Endothelial cell of umbilical vein (primary cell): ENCODE measurements at regions of chr10 and their contacts with region 1.

Region 1: DNA sequence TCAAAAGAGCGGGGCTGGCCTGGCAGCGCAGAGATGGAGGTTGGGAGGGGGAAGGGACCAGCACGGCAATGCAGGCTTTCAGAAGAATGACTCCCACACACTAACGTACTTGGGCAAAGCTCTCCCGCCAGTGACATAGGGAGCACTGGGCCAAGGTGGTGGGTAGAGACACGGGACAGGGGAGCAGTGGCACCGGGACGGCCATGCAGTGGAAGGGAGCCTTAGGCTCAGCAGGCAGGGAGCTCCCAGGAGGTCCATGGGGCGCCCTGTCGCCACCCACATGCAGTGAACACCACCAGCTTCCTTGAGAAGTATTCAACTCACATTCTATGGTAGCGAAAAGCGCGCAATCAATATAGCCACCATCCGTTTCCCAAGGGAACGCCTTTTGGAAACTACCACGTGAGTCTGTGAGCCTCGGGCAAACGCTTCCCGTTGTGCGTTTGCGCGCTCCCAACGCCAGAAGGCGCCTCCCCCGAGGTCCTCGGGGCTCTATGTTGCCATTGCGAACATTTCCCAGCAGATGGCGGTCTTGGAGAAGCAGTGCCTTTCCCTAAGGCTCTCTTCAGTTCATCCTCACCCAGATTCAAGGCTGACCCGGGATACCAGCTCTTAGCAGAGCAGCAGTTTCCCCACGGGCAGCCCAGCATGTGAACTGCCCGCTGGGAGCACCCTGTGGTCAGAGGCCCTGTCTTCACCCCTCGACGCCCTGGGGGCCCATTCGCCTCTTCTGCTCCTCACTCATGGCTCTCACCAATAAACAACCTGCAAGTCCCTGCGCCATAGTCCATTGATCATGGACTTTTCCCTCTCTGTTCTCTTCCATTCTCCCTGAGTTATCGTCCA is 16.4 kb upstream of the OPALIN start:
- DNase-seq: peak; percentile 90
- H3K4me3 ChIP-seq: peak overlapping the region in 2 of 3 experiments; percentile 47 to 48
- H3K27ac ChIP-seq: no peak overlapping the region
- H3K4me1 ChIP-seq: no peaks in the 10 kb centered on the region
- H3K27me3 ChIP-seq: peaks cover 0 to 2% of the 10 kb centered on the region in 2 experiments
- CTCF ChIP-seq: peak; percentile 96 to 98
- POLR2A ChIP-seq: no peak

Region 2: GRCh38 chr10:96334616-96335526 is 40.3 kb before region 1 on chr10:
- CTCF ChIA-PET with region 1: interaction called, 11 read pairs
- POLR2A ChIA-PET with region 1: no interaction called
- dilution Hi-C with region 1: no loop called
- intact Hi-C with region 1: loop called (anchors 1 kb)
- DNase-seq: peak; percentile 50
- H3K4me3 ChIP-seq: no peak overlapping the region
- H3K27ac ChIP-seq: no peak overlapping the region
- H3K4me1 ChIP-seq: no peaks in the 10 kb centered on the region
- H3K27me3 ChIP-seq: peaks cover 0 to 6% of the 10 kb centered on the region in 2 experiments
- CTCF ChIP-seq: peak; percentile 68 to 74
- POLR2A ChIP-seq: no peak

Region 3: DNA sequence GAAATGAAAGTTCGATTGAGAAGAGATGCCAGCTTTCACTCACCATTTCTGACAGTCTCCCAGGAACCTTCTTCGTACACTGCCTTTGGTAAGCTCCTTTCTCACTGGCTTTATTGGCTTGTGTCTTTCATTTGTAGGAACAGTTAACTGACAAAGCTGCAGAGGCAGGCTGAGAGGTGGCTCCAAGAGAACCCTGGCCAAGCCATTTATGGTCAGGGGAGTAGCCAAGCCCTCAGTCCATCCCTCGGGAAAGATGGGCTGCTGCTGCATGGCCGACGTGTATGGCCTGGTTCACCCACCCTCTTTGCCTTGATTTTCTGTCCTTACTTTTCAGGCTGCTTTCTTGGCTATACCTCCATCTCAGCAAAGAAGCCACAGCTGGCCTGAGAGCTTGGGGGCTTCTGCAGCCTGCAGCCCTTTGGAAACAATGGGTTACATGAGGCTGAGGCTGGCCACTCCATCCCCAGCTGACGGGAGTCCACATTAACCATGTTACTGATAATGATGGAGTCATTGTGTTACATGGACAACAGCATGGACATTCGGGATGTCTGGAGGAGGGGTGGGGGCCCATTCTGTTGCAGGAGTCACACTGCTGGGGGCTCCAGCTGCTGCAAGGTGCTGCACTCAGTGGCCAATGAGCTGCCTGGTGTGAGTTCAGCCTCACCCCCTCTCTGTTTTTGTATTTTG is 16.2 kb before region 1 on chr10 and contains the start of gene OPALIN:
- CTCF ChIA-PET with region 1: interaction called, 17 read pairs
- POLR2A ChIA-PET with region 1: no interaction called
- dilution Hi-C with region 1: no loop called
- intact Hi-C with region 1: no loop called
- DNase-seq: no peak
- H3K4me3 ChIP-seq: no peak within 1 kb of the TSS
- H3K27ac ChIP-seq: no peak within 1 kb of the TSS
- H3K4me1 ChIP-seq: no peaks in the 10 kb centered on the region
- H3K27me3 ChIP-seq: peaks cover 2% of the 10 kb centered on the region in 2 experiments
- CTCF ChIP-seq: no peak
- POLR2A ChIP-seq: no peak
- total RNA-seq, gene OPALIN: not detected in 2 replicates

Region 4: DNA sequence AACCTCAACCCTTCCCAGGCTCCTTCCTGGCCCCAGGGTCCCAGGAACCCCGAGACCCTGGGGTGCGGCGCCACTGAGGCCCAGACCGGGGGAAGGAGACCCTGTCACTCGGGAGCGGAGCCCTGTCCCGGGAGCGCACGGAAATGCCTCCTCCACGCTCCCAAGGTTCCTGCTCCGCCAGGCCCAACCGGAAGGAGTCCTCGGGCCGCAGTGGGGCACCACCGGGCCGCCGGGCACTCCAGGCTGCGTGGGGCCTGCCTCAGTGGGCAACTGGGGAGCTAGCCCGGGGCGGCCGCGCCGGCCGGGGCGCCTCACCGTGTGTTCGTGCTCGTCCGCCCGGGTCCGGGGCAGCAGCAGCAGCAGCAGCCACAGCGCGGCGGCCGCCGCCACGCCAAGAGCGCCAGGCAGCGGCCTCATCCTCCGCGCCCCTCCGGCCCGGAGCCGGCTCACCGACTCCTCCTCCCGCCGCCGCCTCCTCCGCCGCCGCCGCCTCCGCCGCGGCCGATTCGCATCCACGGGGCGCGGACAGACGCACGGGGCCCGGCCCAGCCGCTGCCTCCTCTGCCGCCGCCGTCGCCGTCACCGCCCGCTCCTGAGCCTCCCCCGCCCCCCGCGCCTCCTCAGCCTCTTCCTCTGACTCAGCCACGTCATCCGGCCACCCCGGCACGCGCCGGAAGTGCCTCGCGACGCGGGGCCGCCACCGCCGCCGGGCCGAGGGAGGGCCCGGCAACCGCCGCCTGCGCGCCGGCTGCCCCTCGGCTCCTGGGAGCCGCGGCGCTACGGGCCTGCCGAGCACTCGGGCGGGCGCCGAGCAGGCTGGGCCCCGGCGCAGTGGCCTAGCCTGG is 211.4 kb after region 1 on chr10 and contains the start of gene TM9SF3:
- CTCF ChIA-PET with region 1: no interaction called
- POLR2A ChIA-PET with region 1: no interaction called
- dilution Hi-C with region 1: no loop called
- intact Hi-C with region 1: loop called (anchors 1 kb)
- DNase-seq: peak; percentile 84
- H3K4me3 ChIP-seq: peak within 1 kb of the TSS; percentile 59 to 92 (median 61)
- H3K27ac ChIP-seq: peak within 1 kb of the TSS; percentile 98
- H3K4me1 ChIP-seq: peaks cover 53% of the 10 kb centered on the region
- H3K27me3 ChIP-seq: no peaks in the 10 kb centered on the region
- CTCF ChIP-seq: no peak
- POLR2A ChIP-seq: peak; percentile 26
- total RNA-seq, gene TM9SF3: 142 and 144 TPM in 2 replicates

Region 5: GRCh38 chr10:96656839-96657238 is 281.6 kb after region 1 on chr10:
- CTCF ChIA-PET with region 1: no interaction called
- POLR2A ChIA-PET with region 1: no interaction called
- dilution Hi-C with region 1: no loop called
- intact Hi-C with region 1: no loop called
- DNase-seq: no peak
- H3K4me3 ChIP-seq: no peak overlapping the region
- H3K27ac ChIP-seq: no peak overlapping the region
- H3K4me1 ChIP-seq: no peaks in the 10 kb centered on the region
- H3K27me3 ChIP-seq: peaks cover 0 to 3% of the 10 kb centered on the region in 2 experiments
- CTCF ChIP-seq: no peak
- POLR2A ChIP-seq: no peak

Region 6: DNA sequence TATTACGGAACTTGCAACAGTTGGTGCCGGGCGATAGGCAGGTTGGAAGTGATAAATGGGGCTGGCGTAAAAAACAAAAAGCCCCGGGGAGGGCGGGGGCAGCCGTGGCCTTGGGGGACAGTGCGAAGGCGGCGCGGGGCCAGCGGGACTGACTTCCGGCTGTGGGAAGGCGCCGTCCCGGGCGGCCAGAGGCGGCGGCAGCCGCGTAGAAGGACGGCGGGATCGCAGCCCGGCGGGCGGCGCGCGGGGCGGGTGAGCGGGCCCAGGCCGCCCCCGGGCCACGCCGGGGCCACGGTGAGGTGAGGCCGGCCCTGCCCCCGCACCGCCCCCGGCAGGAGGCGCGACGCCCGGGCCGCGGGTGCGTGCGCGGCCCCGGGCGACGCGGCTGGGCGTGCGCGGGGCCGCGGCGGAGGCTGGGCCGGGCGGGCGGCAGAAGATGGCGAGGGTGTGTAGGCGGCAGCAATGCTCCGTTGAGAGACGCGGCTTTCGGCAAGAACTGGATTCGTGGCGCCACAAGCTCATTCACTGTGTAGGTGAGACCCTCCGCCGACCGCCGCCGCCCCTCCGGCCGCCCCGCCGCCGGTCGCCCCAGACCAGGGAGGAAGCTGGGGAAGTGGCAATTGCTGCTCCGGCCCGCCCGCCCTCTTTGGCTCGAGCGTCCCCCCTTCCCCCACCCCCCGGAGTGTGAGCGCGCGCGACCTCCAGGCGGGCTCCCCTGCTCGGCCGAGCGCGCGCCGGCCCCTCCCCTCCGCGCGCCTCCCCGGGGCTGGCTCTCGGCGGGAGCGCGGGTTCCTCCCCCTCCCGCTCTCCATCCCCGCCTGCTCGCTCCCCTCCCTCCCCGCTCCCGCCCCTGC is 456.9 kb after region 1 on chr10 and contains the start of gene LCOR:
- CTCF ChIA-PET with region 1: interaction called, 4 read pairs
- POLR2A ChIA-PET with region 1: no interaction called
- dilution Hi-C with region 1: no loop called
- intact Hi-C with region 1: loop called (anchors 1 kb)
- DNase-seq: peak; percentile 85
- H3K4me3 ChIP-seq: peak within 1 kb of the TSS; percentile 81 to 99 (median 82)
- H3K27ac ChIP-seq: peak within 1 kb of the TSS; percentile 60
- H3K4me1 ChIP-seq: peaks cover 24% of the 10 kb centered on the region
- H3K27me3 ChIP-seq: no peaks in the 10 kb centered on the region
- CTCF ChIP-seq: no peak
- POLR2A ChIP-seq: peak; percentile 87
- total RNA-seq, gene LCOR: 32.9 and 39.0 TPM in 2 replicates